B cell (primary cell): ENCODE measurements at regions of chr1 and their contacts with region 1.

Region 1: DNA sequence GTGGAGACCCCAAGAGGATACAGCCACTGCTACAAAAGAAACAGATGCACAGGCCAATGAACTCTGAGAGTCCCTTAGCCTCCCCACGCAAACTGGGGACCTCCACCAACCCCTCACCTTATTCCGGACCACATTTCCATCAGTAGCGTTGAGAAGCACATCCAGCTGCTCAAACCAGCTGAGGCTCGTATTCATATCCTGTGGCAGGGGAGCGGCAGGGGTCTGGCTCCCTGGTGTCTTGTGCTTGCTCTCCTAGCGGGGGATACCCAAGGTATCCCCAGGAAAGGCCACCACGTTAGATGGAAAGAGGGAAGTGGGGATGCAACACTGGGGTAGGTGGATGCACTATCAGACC is 481 bp downstream of the CCDC163 start:
- DNase-seq: no peak
- ATAC-seq: no peak
- H3K4me3 ChIP-seq: peak overlapping the region; percentile 68 to 89 (median 74)
- H3K4me3 Mint-ChIP-seq: peak overlapping the region; percentile 96
- H3K27ac ChIP-seq: peak overlapping the region; percentile 52 to 67
- H3K27ac Mint-ChIP-seq: peak overlapping the region; percentile 80
- H3K4me1 ChIP-seq: peaks cover 12 to 22% of the 10 kb centered on the region in 2 donors
- H3K4me1 Mint-ChIP-seq: peaks cover 28% of the 10 kb centered on the region
- H3K27me3 ChIP-seq: no peaks in the 10 kb centered on the region
- H3K27me3 Mint-ChIP-seq: no peaks in the 10 kb centered on the region
- CTCF ChIP-seq: no peak

Region 2: DNA sequence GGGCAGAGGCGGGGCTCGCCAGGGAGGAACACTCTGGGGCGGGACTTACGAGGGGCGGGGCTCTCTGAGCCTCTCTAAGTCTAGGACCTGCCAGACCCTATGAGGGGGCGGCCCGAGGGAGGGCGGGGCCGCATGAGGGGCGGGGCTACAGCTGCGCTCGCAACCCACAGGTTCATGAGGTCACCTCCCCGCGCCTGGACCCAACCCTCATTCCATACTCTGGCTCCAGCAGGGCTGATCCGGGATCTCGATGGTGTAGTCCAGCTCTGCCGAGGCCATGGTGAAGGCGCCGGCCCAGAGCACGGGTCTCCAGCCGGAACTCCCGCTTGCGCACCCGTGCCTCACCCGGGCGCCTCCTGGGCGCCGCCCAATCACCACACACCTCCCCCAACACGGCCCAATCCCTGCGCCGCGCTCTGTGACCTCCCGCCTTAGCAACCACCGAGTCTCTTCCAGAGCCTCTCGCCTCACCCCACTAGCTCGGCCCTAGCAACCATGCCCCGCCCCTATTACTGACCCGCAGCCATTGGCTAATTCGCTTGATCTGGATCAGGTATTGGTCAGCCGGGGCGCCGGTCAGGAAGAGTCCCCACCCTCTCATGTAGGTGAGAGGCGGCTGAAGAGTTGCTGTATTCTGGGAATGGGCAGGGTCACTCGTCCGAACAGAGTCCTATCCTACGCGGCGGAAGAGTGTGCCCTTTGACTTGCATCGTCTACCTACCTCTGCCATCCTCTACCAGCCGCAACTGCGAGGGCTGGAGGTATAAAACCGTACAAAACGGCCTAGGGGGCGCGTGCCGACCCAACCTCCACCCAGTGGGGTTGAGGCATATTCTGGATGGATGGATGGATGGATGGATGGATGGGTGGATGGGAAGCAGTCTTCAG is 825.0 kb before region 1 on chr1 and contains the starts of genes ARMH1 and TMEM53:
- CTCF ChIA-PET with region 1: no interaction called
- POLR2A ChIA-PET with region 1: no interaction called
- intact Hi-C with region 1: loop called (anchors 1 kb)
- DNase-seq: peak; percentile 99
- ATAC-seq: peak; percentile 91
- H3K4me3 ChIP-seq: peak within 1 kb of the TSS; percentile 70 to 88 (median 84)
- H3K4me3 Mint-ChIP-seq: peak within 1 kb of the TSS; percentile 91
- H3K27ac ChIP-seq: peak within 1 kb of the TSS; percentile 87 to 94
- H3K27ac Mint-ChIP-seq: peak within 1 kb of the TSS; percentile 96
- H3K4me1 ChIP-seq: peaks cover 34 to 50% of the 10 kb centered on the region in 2 donors
- H3K4me1 Mint-ChIP-seq: peaks cover 35% of the 10 kb centered on the region
- H3K27me3 ChIP-seq: no peaks in the 10 kb centered on the region
- H3K27me3 Mint-ChIP-seq: no peaks in the 10 kb centered on the region
- CTCF ChIP-seq: no peak
- total RNA-seq, gene ARMH1: 10.2 and 11.4 TPM in 2 replicates
- total RNA-seq, gene TMEM53: 5.3 and 6.8 TPM in 2 replicates

Region 3: GRCh38 chr1:44985747-44986359 is 513.5 kb before region 1 on chr1:
- CTCF ChIA-PET with region 1: no interaction called
- POLR2A ChIA-PET with region 1: no interaction called
- intact Hi-C with region 1: loop called (anchors 1 kb)
- DNase-seq: no peak
- ATAC-seq: no peak
- H3K4me3 ChIP-seq: peak overlapping the region; percentile 80 to 91 (median 87)
- H3K4me3 Mint-ChIP-seq: peak overlapping the region; percentile 100
- H3K27ac ChIP-seq: peak overlapping the region; percentile 34 to 66
- H3K27ac Mint-ChIP-seq: peak overlapping the region; percentile 86
- H3K4me1 ChIP-seq: peaks cover 9 to 19% of the 10 kb centered on the region in 2 donors
- H3K4me1 Mint-ChIP-seq: peaks cover 18% of the 10 kb centered on the region
- H3K27me3 ChIP-seq: no peaks in the 10 kb centered on the region
- H3K27me3 Mint-ChIP-seq: no peaks in the 10 kb centered on the region
- CTCF ChIP-seq: no peak

Region 4: DNA sequence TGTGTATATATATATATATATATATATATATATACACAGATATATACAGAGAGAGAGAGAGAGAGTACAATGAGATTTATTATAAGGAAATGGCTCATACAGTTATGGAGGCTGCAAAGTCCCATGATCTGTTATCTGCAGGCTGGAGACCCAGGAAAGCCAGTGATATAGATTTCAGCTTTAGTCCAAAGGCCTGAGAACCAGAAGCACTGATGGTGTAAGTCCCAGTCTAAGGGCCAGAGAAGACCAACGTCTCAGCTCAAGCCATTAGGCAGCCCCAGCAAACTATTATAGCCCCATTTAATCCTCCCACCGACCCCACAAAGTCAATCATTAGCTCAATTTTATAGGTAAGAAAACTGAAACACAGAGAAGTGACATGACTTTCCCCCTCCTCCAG is 207.7 kb before region 1 on chr1:
- CTCF ChIA-PET with region 1: no interaction called
- POLR2A ChIA-PET with region 1: no interaction called
- intact Hi-C with region 1: no loop called
- DNase-seq: no peak
- ATAC-seq: no peak
- H3K4me3 ChIP-seq: no peak overlapping the region
- H3K4me3 Mint-ChIP-seq: no peak overlapping the region
- H3K27ac ChIP-seq: no peak overlapping the region
- H3K27ac Mint-ChIP-seq: no peak overlapping the region
- H3K4me1 ChIP-seq: no peaks in the 10 kb centered on the region
- H3K4me1 Mint-ChIP-seq: no peaks in the 10 kb centered on the region
- H3K27me3 ChIP-seq: no peaks in the 10 kb centered on the region
- H3K27me3 Mint-ChIP-seq: no peaks in the 10 kb centered on the region
- CTCF ChIP-seq: no peak

Region 5: GRCh38 chr1:45512641-45513054 is 13.3 kb after region 1 on chr1:
- CTCF ChIA-PET with region 1: interaction called, 19 read pairs
- POLR2A ChIA-PET with region 1: no interaction called
- intact Hi-C with region 1: no loop called
- DNase-seq: peak; percentile 76
- ATAC-seq: peak; percentile 66
- H3K4me3 ChIP-seq: no peak overlapping the region
- H3K4me3 Mint-ChIP-seq: no peak overlapping the region
- H3K27ac ChIP-seq: no peak overlapping the region
- H3K27ac Mint-ChIP-seq: peak overlapping the region; percentile 76
- H3K4me1 ChIP-seq: no peaks in the 10 kb centered on the region
- H3K4me1 Mint-ChIP-seq: peaks cover 8% of the 10 kb centered on the region
- H3K27me3 ChIP-seq: no peaks in the 10 kb centered on the region
- H3K27me3 Mint-ChIP-seq: no peaks in the 10 kb centered on the region
- CTCF ChIP-seq: peak; percentile 89

Region 6: DNA sequence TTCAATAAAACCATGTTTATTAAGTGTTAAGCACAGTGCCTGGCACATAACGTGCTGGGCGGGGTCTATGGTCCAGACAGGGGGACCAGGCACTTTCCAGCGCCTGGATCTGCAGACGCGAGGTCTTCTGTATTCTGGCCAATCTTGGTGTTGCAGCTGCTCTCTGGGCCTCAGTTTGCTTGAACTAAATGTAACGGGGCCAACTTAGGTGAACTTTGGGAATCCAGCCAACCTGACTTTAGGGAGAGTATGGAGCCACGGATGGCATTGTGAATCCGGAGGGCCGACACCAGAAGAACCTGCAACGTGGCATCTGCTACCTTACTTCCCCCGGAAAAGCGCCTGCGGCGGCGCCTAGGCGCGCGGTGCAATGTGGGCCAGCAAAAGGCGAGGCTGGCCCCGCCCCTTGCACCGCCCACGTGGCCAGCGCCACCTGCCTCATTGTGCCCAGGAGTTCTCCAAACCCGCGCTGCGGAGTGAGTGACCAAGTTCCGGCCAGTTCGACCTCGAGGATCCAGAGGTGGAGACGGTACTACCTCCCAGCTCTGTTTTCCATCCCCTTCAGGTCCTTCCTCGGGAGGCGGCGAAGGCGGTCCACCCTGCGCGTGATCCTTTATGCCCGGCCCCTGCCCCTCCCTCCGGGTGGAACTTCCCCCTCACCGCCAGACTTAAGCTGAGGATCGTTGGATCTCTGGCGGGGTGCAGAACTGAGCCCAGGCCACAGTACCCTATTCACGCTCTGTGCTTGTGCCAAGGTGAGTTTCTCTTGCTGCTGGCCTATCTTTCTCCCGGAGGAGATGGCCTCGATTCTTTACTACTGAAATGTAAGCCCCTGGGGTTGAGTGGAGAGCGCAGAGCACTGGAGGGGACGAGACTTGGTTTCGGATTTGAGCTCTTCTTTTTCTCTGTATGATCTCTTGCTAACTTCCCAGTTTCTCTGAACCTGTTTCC is 51.3 kb after region 1 on chr1 and contains the start of gene AKR1A1:
- CTCF ChIA-PET with region 1: interaction called, 5 read pairs
- POLR2A ChIA-PET with region 1: interaction called, 7 read pairs
- intact Hi-C with region 1: loop called (anchors 1 kb)
- DNase-seq: peak; percentile 96
- ATAC-seq: peak; percentile 93
- H3K4me3 ChIP-seq: peak within 1 kb of the TSS; percentile 65 to 100 (median 90)
- H3K4me3 Mint-ChIP-seq: peak within 1 kb of the TSS; percentile 97
- H3K27ac ChIP-seq: peak within 1 kb of the TSS; percentile 84 to 96
- H3K27ac Mint-ChIP-seq: peak within 1 kb of the TSS; percentile 96
- H3K4me1 ChIP-seq: peaks cover 23 to 28% of the 10 kb centered on the region in 2 donors
- H3K4me1 Mint-ChIP-seq: peaks cover 30% of the 10 kb centered on the region
- H3K27me3 ChIP-seq: no peaks in the 10 kb centered on the region
- H3K27me3 Mint-ChIP-seq: no peaks in the 10 kb centered on the region
- CTCF ChIP-seq: no peak
- total RNA-seq, gene AKR1A1: 101 and 145 TPM in 2 replicates